Posterior vena cava (tissue), 2 donors: ENCODE measurements at regions of chr1 and their contacts with region 1.

Region 1: GRCh38 chr1:161933592-161934588 is 89.8 kb downstream of the OLFML2B start:
- DNase-seq: no peak

Region 2: DNA sequence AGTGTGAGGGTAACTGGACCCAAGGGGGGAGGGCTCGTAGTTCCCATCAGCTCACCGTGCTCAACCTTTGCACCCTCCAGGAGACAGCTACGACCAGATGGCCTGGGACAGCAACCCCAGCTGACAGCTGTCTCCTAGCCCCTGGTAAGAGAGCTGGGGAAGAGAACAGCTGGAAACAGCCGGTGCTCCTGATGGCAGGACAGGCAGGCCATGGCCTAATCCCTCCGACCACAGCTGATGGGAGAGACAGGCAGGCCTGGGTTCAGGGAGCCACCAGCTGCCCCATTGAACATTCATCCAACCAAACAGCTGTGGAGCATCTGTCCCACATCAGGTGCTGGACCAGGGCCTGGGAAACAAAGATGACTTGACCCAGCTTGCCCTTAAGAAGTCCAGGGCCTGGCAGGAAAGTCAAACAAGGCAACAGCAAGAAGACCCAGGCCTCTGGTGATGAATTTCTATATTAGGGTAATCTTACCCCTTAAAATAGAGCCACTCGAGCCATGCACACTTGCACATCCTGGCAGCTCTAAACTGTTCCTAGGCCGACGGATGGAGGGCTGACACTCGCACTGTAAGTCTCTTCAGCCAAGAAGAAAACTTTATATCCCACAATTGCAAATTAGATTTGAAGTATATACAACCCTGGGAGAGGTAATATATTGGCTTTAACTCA is 77.6 kb after region 1 on chr1:
- intact Hi-C with region 1: loop called in 1 of 2 experiments (anchors 2 kb)
- DNase-seq: no peak